Vagina (tissue), 2 donors: ENCODE measurements at regions of chr3 and their contacts with region 1.

Region 1: GRCh38 chr3:181886676-181887075 is 175.0 kb downstream of the SOX2 start:
- DNase-seq: no peak
- H3K4me3 ChIP-seq: no peak overlapping the region
- H3K27ac ChIP-seq: no peak overlapping the region
- H3K4me1 ChIP-seq: no peaks in the 10 kb centered on the region
- H3K27me3 ChIP-seq: no peaks in the 10 kb centered on the region
- CTCF ChIP-seq: no peak
- POLR2A ChIP-seq: no peak

Region 2: DNA sequence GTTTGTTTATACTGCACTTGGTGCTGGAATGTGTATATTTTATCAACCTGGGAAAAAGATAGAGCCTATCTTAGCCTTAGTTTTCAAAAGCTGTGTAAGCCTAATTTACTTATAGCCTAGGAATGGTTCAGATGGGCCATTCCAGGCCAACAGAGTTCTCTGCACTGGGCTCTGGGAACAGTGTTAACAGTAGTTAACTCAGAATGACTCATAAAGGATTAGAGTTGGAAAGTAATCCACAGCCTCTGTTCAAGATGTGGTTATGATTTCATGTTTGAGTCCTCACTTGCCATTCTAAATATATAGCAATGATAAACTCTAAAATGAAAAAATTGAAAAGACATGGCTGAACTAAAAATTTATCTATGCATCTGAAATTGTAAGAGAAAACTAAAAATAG is 1827.3 kb before region 1 on chr3:
- intact Hi-C with region 1: no loop called
- DNase-seq: no peak
- H3K4me3 ChIP-seq: no peak overlapping the region
- H3K27ac ChIP-seq: no peak overlapping the region
- H3K4me1 ChIP-seq: no peaks in the 10 kb centered on the region
- H3K27me3 ChIP-seq: no peaks in the 10 kb centered on the region
- CTCF ChIP-seq: no peak
- POLR2A ChIP-seq: no peak

Region 3: GRCh38 chr3:182092662-182093262 is 206.1 kb after region 1 on chr3:
- intact Hi-C with region 1: no loop called
- DNase-seq: no peak
- H3K4me3 ChIP-seq: no peak overlapping the region
- H3K27ac ChIP-seq: no peak overlapping the region
- H3K4me1 ChIP-seq: no peaks in the 10 kb centered on the region
- H3K27me3 ChIP-seq: no peaks in the 10 kb centered on the region
- CTCF ChIP-seq: no peak
- POLR2A ChIP-seq: no peak

Region 4: DNA sequence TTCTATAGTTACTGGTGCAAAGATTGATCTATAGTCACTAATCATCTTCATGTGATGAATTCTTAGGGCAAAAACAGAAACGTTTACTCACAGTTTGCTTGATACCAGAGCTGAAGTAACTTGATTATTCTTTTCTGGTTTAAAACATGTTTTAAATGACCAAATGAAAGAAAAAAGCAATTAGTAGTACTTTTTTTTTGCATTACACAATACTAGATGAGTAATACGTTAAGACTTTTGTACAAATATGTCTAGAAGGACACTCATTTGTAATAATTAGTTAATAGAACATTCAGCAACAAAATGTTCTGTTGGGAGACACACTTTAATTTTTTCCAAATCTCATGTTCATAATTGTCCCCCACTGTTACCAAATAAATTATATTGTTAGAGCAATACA is 348.2 kb after region 1 on chr3:
- intact Hi-C with region 1: loop called (anchors 5 kb)
- DNase-seq: no peak
- H3K4me3 ChIP-seq: no peak overlapping the region
- H3K27ac ChIP-seq: no peak overlapping the region
- H3K4me1 ChIP-seq: no peaks in the 10 kb centered on the region
- H3K27me3 ChIP-seq: no peaks in the 10 kb centered on the region
- CTCF ChIP-seq: no peak
- POLR2A ChIP-seq: no peak